IMR-90 (cell line): ENCODE measurements at regions of chr2 and their contacts with region 1.

Region 1: GRCh38 chr2:128178650-128179460 is 87.9 kb downstream of the UGGT1 start:
- DNase-seq: peak; percentile 89
- ATAC-seq: peak; percentile 79
- H3K4me3 ChIP-seq: no peak overlapping the region
- H3K27ac ChIP-seq: peak overlapping the region; percentile 88; the same call in 1 of the 2 replicates
- H3K4me1 ChIP-seq: peaks cover 13% of the 10 kb centered on the region
- H3K27me3 ChIP-seq: no peaks in the 10 kb centered on the region
- CTCF ChIP-seq: peak; percentile 95
- POLR2A ChIP-seq: no peak
- RAD21 ChIP-seq: peak; percentile 89

Region 2: GRCh38 chr2:128305159-128306087 is 126.6 kb after region 1 on chr2:
- CTCF ChIA-PET with region 1: no interaction called
- POLR2A ChIA-PET with region 1: no interaction called
- dilution Hi-C with region 1: no loop called
- in situ Hi-C with region 1: loop called (anchors 5 kb)
- intact Hi-C with region 1: loop called (anchors 1 kb)
- DNase-seq: peak; percentile 98
- ATAC-seq: peak; percentile 30
- H3K4me3 ChIP-seq: no peak overlapping the region
- H3K27ac ChIP-seq: peak overlapping the region; percentile 95
- H3K4me1 ChIP-seq: peaks cover 81% of the 10 kb centered on the region
- H3K27me3 ChIP-seq: no peaks in the 10 kb centered on the region
- CTCF ChIP-seq: 0 out of 2 replicates have a peak, but pooled peaks have one; percentile 8
- POLR2A ChIP-seq: peak; percentile 22
- RAD21 ChIP-seq: peak; percentile 5; the same call in 1 of the 2 replicates

Region 3: GRCh38 chr2:128342550-128342949 is 163.7 kb after region 1 on chr2:
- CTCF ChIA-PET with region 1: no interaction called
- POLR2A ChIA-PET with region 1: no interaction called
- dilution Hi-C with region 1: no loop called
- in situ Hi-C with region 1: no loop called
- intact Hi-C with region 1: no loop called
- DNase-seq: no peak
- ATAC-seq: no peak
- H3K4me3 ChIP-seq: no peak overlapping the region
- H3K27ac ChIP-seq: no peak overlapping the region
- H3K4me1 ChIP-seq: peaks cover under 1% of the 10 kb centered on the region
- H3K27me3 ChIP-seq: no peaks in the 10 kb centered on the region
- CTCF ChIP-seq: no peak
- POLR2A ChIP-seq: no peak
- RAD21 ChIP-seq: no peak